Dendritic cell treated with granulocyte-macrophage colony-stimulating factor and Interleukin-4, amounts not matched to agents 40 ng/mL and 50 ng/mL, for 4 days (primary cell): ENCODE measurements at regions of chr14 and their contacts with region 1.

Region 1: DNA sequence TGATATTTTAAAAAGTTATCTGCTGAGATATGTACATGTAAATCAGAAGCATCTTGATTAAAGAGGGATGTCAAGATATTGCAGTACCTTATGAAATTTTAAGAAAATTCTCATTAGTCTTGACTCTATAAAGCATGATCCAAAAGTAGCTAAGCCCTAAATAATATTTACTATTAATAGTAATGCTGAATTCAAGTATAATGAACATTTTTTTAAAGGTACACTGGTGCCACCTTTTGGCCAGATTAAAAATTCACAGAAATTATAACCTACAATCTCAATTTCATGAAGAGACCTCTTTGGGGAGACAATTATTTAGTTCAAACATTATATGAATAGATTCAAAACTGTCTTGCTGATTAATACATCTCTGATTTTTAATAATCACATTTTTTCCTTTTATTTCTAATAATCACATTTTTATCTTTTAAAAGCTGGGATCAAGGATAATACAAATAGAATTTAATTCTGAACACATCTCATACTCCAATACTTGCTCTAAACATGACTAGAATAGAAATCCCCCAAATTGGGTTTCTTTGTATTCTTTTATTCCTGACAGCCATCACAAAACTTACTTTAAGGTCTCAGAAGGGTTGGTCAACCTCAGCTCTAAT is 13.4 kb downstream of the AKAP5 start:
- H3K4me3 Mint-ChIP-seq: no peak overlapping the region
- H3K27ac Mint-ChIP-seq: no peak overlapping the region
- H3K4me1 Mint-ChIP-seq: peaks cover 14% of the 10 kb centered on the region
- H3K27me3 Mint-ChIP-seq: no peaks in the 10 kb centered on the region

Region 2: DNA sequence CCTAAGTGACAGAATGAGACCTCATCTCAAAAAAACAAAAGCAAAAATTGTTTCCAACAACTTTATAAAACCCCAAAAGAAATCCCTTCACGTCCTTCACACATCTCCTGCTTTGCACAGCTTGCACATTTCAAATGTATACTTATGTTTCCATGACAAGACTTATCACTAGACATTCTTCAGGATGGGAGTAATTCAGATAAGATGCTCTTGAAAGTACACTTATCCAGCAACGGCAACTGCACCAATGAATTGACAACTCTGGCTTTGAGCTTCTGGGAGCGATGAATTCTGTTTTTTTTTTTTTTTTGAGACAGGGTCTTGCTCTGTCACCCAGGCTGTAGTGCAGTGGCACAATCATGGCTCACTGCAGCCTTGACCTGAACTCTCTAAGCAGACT is 44.2 kb before region 1 on chr14:
- intact Hi-C with region 1: loop called (anchors 1 kb)
- H3K4me3 Mint-ChIP-seq: no peak overlapping the region
- H3K27ac Mint-ChIP-seq: no peak overlapping the region
- H3K4me1 Mint-ChIP-seq: no peaks in the 10 kb centered on the region
- H3K27me3 Mint-ChIP-seq: no peaks in the 10 kb centered on the region